Activated CD4-positive, alpha-beta memory T cell treated with anti-CD3 and anti-CD28 coated beads, Interleukin-2, amount 10 ng/mL, durations not matched to agents 7 days and 5 days (primary cell): ENCODE measurements at regions of chr1 and their contacts with region 1.

Region 1: GRCh38 chr1:114757455-114758250 is at the start of gene CSDE1:
- DNase-seq: peak; percentile 98
- H3K4me3 Mint-ChIP-seq: peak within 1 kb of the TSS; percentile 99
- H3K27ac Mint-ChIP-seq: peak within 1 kb of the TSS; percentile 100
- H3K4me1 Mint-ChIP-seq: peaks cover 49% of the 10 kb centered on the region
- H3K27me3 Mint-ChIP-seq: no peaks in the 10 kb centered on the region
- total RNA-seq, gene CSDE1: 407 to 411 TPM

Region 2: GRCh38 chr1:114511032-114511785 is 246.4 kb before region 1 on chr1 and contains the start of gene TRIM33:
- CTCF ChIA-PET with region 1: no interaction called
- POLR2A ChIA-PET with region 1: interaction called, 24 read pairs
- DNase-seq: peak; percentile 92
- H3K4me3 Mint-ChIP-seq: peak within 1 kb of the TSS; percentile 93
- H3K27ac Mint-ChIP-seq: peak within 1 kb of the TSS; percentile 98
- H3K4me1 Mint-ChIP-seq: peaks cover 47% of the 10 kb centered on the region
- H3K27me3 Mint-ChIP-seq: no peaks in the 10 kb centered on the region
- total RNA-seq, gene TRIM33: 36.0 to 36.5 TPM

Region 3: DNA sequence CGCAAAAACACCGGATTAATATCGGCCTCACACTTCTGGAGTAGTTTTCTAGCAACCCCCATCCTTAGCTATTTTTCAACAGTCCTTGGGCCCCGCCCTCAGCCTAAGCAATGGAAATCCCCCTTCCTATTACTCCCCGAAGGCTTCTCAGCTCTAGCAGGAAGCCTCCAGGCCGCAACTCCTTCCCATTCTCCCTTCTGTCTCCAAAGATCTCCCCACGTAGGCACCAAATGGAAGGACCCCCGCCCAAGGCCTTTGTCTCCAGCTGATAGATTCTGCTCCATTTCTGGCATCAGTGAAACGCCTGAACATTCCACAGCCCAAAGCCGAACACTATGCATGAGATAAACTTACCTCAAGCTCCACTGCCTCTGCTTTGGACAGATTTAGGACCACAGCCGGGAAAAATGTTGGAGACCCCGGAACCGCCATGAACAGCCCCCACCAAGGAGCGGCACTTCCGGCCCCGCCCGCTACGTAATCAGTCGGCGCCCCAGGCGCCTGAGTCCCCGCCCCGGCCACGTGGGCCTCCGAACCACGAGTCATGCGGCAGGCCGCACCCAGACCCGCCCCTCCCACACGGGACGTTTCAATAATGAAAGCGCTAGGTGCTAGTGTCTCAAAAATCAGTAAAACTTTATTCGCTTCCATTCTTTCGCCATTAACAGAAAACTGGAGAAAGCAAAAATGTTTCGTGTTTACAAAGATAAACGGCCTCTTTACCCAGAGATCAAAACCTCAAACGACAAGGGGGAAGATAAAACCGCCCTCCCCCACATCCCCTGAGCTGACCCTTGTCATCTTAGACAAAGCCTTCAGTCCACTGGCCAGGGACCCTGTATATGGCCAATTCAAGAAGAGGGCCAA is 41.1 kb before region 1 on chr1 and contains the start of gene NRAS:
- CTCF ChIA-PET with region 1: interaction called, 6 read pairs
- POLR2A ChIA-PET with region 1: interaction called, 40 read pairs
- DNase-seq: peak; percentile 96
- H3K4me3 Mint-ChIP-seq: peak within 1 kb of the TSS; percentile 97
- H3K27ac Mint-ChIP-seq: peak within 1 kb of the TSS; percentile 98
- H3K4me1 Mint-ChIP-seq: peaks cover 26% of the 10 kb centered on the region
- H3K27me3 Mint-ChIP-seq: no peaks in the 10 kb centered on the region
- total RNA-seq, gene NRAS: 53.4 to 54.1 TPM

Region 4: GRCh38 chr1:114746450-114747121 is 11.1 kb before region 1 on chr1:
- CTCF ChIA-PET with region 1: no interaction called
- POLR2A ChIA-PET with region 1: interaction called, 17 read pairs
- DNase-seq: no peak
- H3K4me3 Mint-ChIP-seq: no peak overlapping the region
- H3K27ac Mint-ChIP-seq: no peak overlapping the region
- H3K4me1 Mint-ChIP-seq: peaks cover 74% of the 10 kb centered on the region
- H3K27me3 Mint-ChIP-seq: no peaks in the 10 kb centered on the region

Region 5: GRCh38 chr1:114780344-114781226 is 22.9 kb after region 1 on chr1 and contains the start of gene SIKE1:
- CTCF ChIA-PET with region 1: interaction called, 4 read pairs
- POLR2A ChIA-PET with region 1: interaction called, 56 read pairs
- DNase-seq: peak; percentile 96
- H3K4me3 Mint-ChIP-seq: peak within 1 kb of the TSS; percentile 98
- H3K27ac Mint-ChIP-seq: peak within 1 kb of the TSS; percentile 95
- H3K4me1 Mint-ChIP-seq: peaks cover 30% of the 10 kb centered on the region
- H3K27me3 Mint-ChIP-seq: peaks cover 11% of the 10 kb centered on the region
- total RNA-seq, gene SIKE1: 59.4 to 68.5 TPM

Region 6: DNA sequence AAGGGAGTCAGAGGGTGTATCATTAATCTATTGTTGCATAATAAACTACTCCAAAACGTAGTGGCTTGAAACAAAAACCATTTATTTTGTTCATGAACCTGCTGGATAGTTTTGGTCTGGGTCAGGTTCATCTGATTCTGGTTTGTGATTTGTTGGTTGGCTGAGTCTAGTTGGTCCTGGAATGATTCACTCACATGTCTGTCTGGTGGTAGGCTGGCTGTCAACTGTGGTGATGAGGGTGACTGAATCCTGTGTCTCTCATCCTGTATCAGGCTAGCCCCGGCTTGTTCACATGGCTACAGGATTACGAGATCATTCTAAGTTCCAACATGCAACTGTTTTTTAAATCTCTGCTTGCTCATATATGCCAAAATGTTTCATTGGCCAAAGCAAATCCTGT is 45.3 kb after region 1 on chr1:
- CTCF ChIA-PET with region 1: no interaction called
- POLR2A ChIA-PET with region 1: no interaction called
- DNase-seq: no peak
- H3K4me3 Mint-ChIP-seq: no peak overlapping the region
- H3K27ac Mint-ChIP-seq: no peak overlapping the region
- H3K4me1 Mint-ChIP-seq: no peaks in the 10 kb centered on the region
- H3K27me3 Mint-ChIP-seq: peaks cover 9% of the 10 kb centered on the region